Naive thymus-derived CD4-positive, alpha-beta T cell (primary cell): ENCODE measurements at regions of chr19 and their contacts with region 1.

Region 1: GRCh38 chr19:53195265-53195903 is 2.2 kb upstream of the ZNF665 start:
- DNase-seq: peak; percentile 39 to 86 (median 77)
- ATAC-seq: peak; percentile 53
- H3K4me3 ChIP-seq: no peak overlapping the region
- H3K4me3 Mint-ChIP-seq: peak overlapping the region; percentile 4 to 93 (median 64)
- H3K27ac ChIP-seq: no peak overlapping the region
- H3K27ac Mint-ChIP-seq: peak overlapping the region; percentile 30 to 96 (median 64)
- H3K4me1 ChIP-seq: peaks cover 9% of the 10 kb centered on the region in 2 donors
- H3K4me1 Mint-ChIP-seq: peaks cover 17 to 57% (median 46%) of the 10 kb centered on the region in 7 donors
- H3K27me3 ChIP-seq: no peaks in the 10 kb centered on the region
- H3K27me3 Mint-ChIP-seq: no peaks in the 10 kb centered on the region

Region 2: DNA sequence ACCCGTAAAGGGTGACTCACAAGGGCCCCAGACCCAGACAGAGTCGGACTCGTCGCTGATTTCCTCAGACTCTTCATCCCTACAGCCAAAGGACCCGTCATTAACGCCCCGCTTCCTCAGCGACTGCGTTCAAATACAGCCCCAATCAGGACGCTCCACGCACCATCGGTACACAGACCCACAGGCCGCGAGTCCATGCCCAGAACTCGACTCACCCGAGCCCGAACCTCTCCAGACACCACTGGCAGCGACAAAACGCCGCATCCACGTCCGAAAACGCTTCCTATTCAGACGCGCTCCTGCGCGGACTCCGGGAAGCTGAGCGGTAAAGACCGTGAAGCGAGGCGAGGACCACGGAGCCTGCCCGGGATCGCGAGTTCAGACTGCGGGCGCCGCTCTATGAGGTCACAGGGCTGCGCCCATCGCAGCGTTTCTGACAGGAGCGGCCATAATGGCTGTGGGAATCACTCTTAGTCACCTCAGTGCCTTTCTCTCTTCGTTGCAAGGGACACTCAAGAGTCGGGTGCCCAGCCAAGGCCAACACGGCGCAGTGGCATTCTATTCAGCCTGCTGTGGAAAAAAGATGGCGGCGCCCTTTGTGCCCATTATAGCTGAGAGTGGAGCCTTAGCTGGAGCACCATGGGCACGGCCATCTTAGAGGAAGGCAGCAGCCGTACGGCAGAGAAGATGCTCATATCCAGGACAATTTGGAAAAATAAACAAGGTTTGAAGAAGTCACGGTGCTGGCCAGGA is 1167.2 kb before region 1 on chr19 and contains the start of gene ZNF614:
- CTCF ChIA-PET with region 1: no interaction called
- POLR2A ChIA-PET with region 1: interaction called, 5 read pairs
- intact Hi-C with region 1: loop called in 1 of 2 experiments (anchors 5 kb)
- DNase-seq: peak; percentile 80 to 95 (median 89)
- ATAC-seq: peak; percentile 93
- H3K4me3 ChIP-seq: peak within 1 kb of the TSS; percentile 89
- H3K4me3 Mint-ChIP-seq: peak within 1 kb of the TSS; percentile 89 to 99 (median 96)
- H3K27ac ChIP-seq: peak within 1 kb of the TSS; percentile 90
- H3K27ac Mint-ChIP-seq: peak within 1 kb of the TSS; percentile 91 to 99 (median 96)
- H3K4me1 ChIP-seq: peaks cover 12 to 16% of the 10 kb centered on the region in 2 donors
- H3K4me1 Mint-ChIP-seq: peaks cover 6 to 35% (median 31%) of the 10 kb centered on the region in 7 donors
- H3K27me3 ChIP-seq: no peaks in the 10 kb centered on the region
- H3K27me3 Mint-ChIP-seq: no peaks in the 10 kb centered on the region
- total RNA-seq, gene ZNF614: 5.0 to 14.1 (median 11.1) TPM

Region 3: GRCh38 chr19:52942386-52943133 is 252.8 kb before region 1 on chr19:
- CTCF ChIA-PET with region 1: no interaction called
- POLR2A ChIA-PET with region 1: no interaction called
- intact Hi-C with region 1: loop called (anchors 5 kb)
- DNase-seq: peak; percentile 88 to 99 (median 95)
- ATAC-seq: peak; percentile 100
- H3K4me3 ChIP-seq: peak overlapping the region; percentile 98
- H3K4me3 Mint-ChIP-seq: peak overlapping the region; percentile 87 to 95 (median 92)
- H3K27ac ChIP-seq: peak overlapping the region; percentile 85
- H3K27ac Mint-ChIP-seq: peak overlapping the region; percentile 33 to 94 (median 89)
- H3K4me1 ChIP-seq: peaks cover 0 to 4% of the 10 kb centered on the region in 2 donors
- H3K4me1 Mint-ChIP-seq: peaks cover 12 to 27% (median 16%) of the 10 kb centered on the region in 7 donors
- H3K27me3 ChIP-seq: no peaks in the 10 kb centered on the region
- H3K27me3 Mint-ChIP-seq: no peaks in the 10 kb centered on the region

Region 4: GRCh38 chr19:53254411-53255341 is 59.3 kb after region 1 on chr19 and contains the start of gene ZNF677:
- CTCF ChIA-PET with region 1: no interaction called
- POLR2A ChIA-PET with region 1: no interaction called
- intact Hi-C with region 1: loop called in 1 of 2 experiments (anchors 1 kb)
- DNase-seq: peak; percentile 42 to 86 (median 77)
- ATAC-seq: peak; percentile 100
- H3K4me3 ChIP-seq: peak within 1 kb of the TSS; percentile 54
- H3K4me3 Mint-ChIP-seq: peak within 1 kb of the TSS; percentile 84 to 93 (median 89)
- H3K27ac ChIP-seq: peak within 1 kb of the TSS; percentile 66
- H3K27ac Mint-ChIP-seq: peak within 1 kb of the TSS in 8 of 9 donors; percentile 21 to 94 (median 78)
- H3K4me1 ChIP-seq: peaks cover 0 to 6% of the 10 kb centered on the region in 2 donors
- H3K4me1 Mint-ChIP-seq: peaks cover 0 to 17% (median 11%) of the 10 kb centered on the region in 7 donors
- H3K27me3 ChIP-seq: no peaks in the 10 kb centered on the region
- H3K27me3 Mint-ChIP-seq: peaks cover 0 to 13% (median 12%) of the 10 kb centered on the region in 5 donors
- total RNA-seq, gene ZNF677: 2.2 to 25.9 (median 7.4) TPM

Region 5: GRCh38 chr19:53431399-53432087 is 236.2 kb after region 1 on chr19 and contains the start of gene ZNF761:
- CTCF ChIA-PET with region 1: no interaction called
- POLR2A ChIA-PET with region 1: interaction called, 3 read pairs
- intact Hi-C with region 1: loop called (anchors 1 kb)
- DNase-seq: peak; percentile 94 to 99 (median 98)
- ATAC-seq: peak; percentile 100
- H3K4me3 ChIP-seq: peak within 1 kb of the TSS; percentile 91
- H3K4me3 Mint-ChIP-seq: peak within 1 kb of the TSS; percentile 94 to 99 (median 97)
- H3K27ac ChIP-seq: peak within 1 kb of the TSS; percentile 79
- H3K27ac Mint-ChIP-seq: peak within 1 kb of the TSS; percentile 90 to 99 (median 96)
- H3K4me1 ChIP-seq: peaks cover 6 to 16% of the 10 kb centered on the region in 2 donors
- H3K4me1 Mint-ChIP-seq: peaks cover 20 to 55% (median 35%) of the 10 kb centered on the region in 7 donors
- H3K27me3 ChIP-seq: no peaks in the 10 kb centered on the region
- H3K27me3 Mint-ChIP-seq: no peaks in the 10 kb centered on the region
- total RNA-seq, gene ZNF761: 8.0 to 18.8 (median 13.1) TPM

Region 6: GRCh38 chr19:53844849-53845246 is 649.5 kb after region 1 on chr19:
- CTCF ChIA-PET with region 1: interaction called, 3 read pairs
- POLR2A ChIA-PET with region 1: no interaction called
- intact Hi-C with region 1: loop called in 1 of 2 experiments (anchors 5 kb)
- DNase-seq: no peak
- ATAC-seq: peak; percentile 63
- H3K4me3 ChIP-seq: no peak overlapping the region
- H3K4me3 Mint-ChIP-seq: no peak overlapping the region
- H3K27ac ChIP-seq: no peak overlapping the region
- H3K27ac Mint-ChIP-seq: no peak overlapping the region
- H3K4me1 ChIP-seq: peaks cover 0 to 3% of the 10 kb centered on the region in 2 donors
- H3K4me1 Mint-ChIP-seq: peaks cover 0 to 7% (median 5%) of the 10 kb centered on the region in 7 donors
- H3K27me3 ChIP-seq: peaks cover 0 to 4% of the 10 kb centered on the region in 2 donors
- H3K27me3 Mint-ChIP-seq: peaks cover 18 to 30% (median 23%) of the 10 kb centered on the region in 5 donors

Region 7: GRCh38 chr19:54189735-54190502 is 994.5 kb after region 1 on chr19:
- CTCF ChIA-PET with region 1: no interaction called
- POLR2A ChIA-PET with region 1: no interaction called
- intact Hi-C with region 1: loop called in 1 of 2 experiments (anchors 5 kb)
- DNase-seq: peak; percentile 98 to 100 (median 100)
- ATAC-seq: peak; percentile 73
- H3K4me3 ChIP-seq: peak overlapping the region; percentile 81
- H3K4me3 Mint-ChIP-seq: peak overlapping the region; percentile 90 to 100 (median 93)
- H3K27ac ChIP-seq: peak overlapping the region; percentile 99
- H3K27ac Mint-ChIP-seq: peak overlapping the region; percentile 97 to 100 (median 99)
- H3K4me1 ChIP-seq: peaks cover 20 to 22% of the 10 kb centered on the region in 2 donors
- H3K4me1 Mint-ChIP-seq: peaks cover 15 to 47% (median 39%) of the 10 kb centered on the region in 7 donors
- H3K27me3 ChIP-seq: no peaks in the 10 kb centered on the region
- H3K27me3 Mint-ChIP-seq: peaks cover 0 to 2% (median 0%) of the 10 kb centered on the region in 5 donors